Right lobe of liver (tissue), 6 donors: ENCODE measurements at regions of chr1 and their contacts with region 1.

Region 1: GRCh38 chr1:30911046-30911954 is 2.7 kb upstream of the SDC3 start:
- DNase-seq: peak; percentile 85 to 89 (median 86)
- ATAC-seq: peak; percentile 75 to 83 (median 78)
- H3K4me3 ChIP-seq: no peak overlapping the region
- H3K27ac ChIP-seq: no peak overlapping the region
- H3K4me1 ChIP-seq: peaks cover 0 to 4% (median 0%) of the 10 kb centered on the region in 4 donors
- H3K27me3 ChIP-seq: no peaks in the 10 kb centered on the region
- CTCF ChIP-seq: peak; percentile 81 to 93 (median 86)
- POLR2A ChIP-seq: no peak

Region 2: DNA sequence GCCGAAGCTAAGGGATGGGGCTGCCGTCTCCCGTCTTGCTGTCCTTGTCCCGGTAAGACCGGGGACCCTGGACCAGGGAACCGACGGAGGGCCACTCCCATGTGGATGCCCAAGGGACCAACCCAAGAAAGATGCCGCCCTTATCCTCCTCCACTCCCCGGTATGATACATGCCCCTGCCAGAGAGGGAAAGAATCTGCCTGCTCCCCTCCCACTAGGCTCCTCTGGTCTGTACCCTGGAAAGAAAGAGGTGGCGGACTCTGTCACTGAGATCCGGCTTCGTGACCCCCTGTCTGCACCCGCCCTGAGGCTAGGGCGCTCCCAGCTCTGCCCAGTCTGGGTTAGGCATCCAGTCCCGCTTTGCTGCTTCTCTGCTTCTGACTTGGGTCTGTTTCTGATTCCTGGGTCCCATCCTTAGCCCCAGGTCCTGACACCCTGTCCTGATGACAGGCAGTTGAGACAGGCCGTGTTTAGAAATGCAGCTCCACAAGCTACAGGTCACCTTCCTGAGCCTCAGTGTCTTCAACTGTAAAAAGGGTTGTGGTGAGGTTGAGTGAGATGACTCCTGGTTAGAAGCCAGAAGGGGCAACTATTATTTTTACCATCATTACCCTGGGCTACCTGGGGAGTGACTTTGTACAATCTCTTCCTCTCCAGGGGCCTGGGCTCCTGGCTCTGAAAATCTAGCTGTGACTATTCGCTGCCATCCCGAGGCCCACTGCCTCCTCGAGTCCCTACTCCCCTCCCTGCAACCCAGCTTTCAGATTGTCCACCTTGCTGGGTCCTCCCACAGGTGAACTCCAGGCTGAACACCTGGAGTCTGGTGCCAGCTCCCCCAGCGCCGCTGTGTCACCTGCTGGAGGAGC is 191.7 kb before region 1 on chr1:
- intact Hi-C with region 1: loop called in 1 of 2 experiments (anchors 10 kb)
- DNase-seq: peak in 1 of 3 donors; percentile 55
- ATAC-seq: no peak
- H3K4me3 ChIP-seq: peak overlapping the region; percentile 51 to 60 (median 59)
- H3K27ac ChIP-seq: peak overlapping the region; percentile 97 to 99 (median 99)
- H3K4me1 ChIP-seq: peaks cover 0 to 7% (median 0%) of the 10 kb centered on the region in 4 donors
- H3K27me3 ChIP-seq: no peaks in the 10 kb centered on the region
- CTCF ChIP-seq: peak in 1 of 4 donors; percentile 1
- POLR2A ChIP-seq: no peak

Region 3: DNA sequence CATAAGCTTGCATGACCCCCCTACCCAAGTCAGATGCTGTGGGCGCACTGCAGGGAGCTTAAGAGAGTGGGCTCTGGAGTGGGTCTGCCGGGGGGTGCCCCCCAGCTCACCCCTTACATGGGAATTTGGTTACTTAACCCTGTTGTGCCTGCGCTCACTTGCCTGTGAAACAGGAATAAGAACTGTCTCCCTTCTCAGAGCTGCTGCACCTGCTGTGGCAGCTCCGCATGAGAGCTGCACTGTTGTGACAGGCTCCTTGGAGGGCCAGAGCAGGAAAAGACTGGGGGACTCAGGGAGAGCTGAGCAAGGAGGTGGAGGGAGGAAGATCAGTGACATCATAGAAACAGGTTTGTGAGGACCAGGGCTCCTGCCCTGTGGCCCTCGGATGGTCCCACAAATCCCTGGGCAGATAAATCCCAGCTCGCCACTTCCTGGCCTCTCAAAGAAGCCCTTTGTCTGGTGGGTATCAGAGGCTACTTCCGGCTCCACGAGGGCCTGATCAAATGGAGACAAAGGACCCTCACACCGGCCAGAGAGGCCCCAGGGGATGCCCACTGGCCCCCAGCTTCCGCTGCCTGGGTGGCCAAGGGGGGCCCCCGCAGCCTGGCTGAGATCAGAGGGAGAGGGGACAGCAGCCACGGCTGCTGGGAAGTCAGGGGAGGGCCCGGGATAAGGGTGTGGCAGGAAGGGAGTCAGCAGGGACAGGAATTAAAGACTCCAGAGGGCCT is 124.9 kb before region 1 on chr1:
- intact Hi-C with region 1: loop called in 1 of 2 experiments (anchors 5 kb)
- DNase-seq: peak in 1 of 3 donors; percentile 30
- ATAC-seq: no peak
- H3K4me3 ChIP-seq: no peak overlapping the region
- H3K27ac ChIP-seq: no peak overlapping the region
- H3K4me1 ChIP-seq: peaks cover 0 to 12% (median 5%) of the 10 kb centered on the region in 4 donors
- H3K27me3 ChIP-seq: no peaks in the 10 kb centered on the region
- CTCF ChIP-seq: no peak
- POLR2A ChIP-seq: no peak

Region 4: DNA sequence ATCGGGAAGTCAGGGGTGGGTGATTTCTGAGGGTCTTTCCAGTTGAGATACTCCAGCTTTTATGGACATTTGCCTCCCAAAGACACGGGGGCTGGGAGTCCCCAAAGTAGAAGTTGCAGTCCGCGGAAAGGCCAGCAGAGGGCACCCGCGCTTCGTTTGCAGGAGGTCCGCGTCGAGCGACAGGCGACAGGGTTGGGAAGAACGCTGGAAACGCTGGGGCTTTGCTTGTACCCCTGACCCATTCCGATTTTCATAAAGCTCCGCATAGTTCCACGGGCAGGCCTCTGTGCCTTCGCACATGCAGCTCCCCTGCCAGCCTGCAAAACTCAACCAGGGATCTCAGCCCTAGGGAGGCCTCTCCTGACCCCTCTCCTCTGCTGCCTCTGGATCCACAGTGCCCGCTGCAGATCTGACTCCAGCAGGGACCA is 109.5 kb before region 1 on chr1:
- intact Hi-C with region 1: loop called (anchors 2 to 5 kb)
- DNase-seq: peak; percentile 79 to 83 (median 83)
- ATAC-seq: peak; percentile 75 to 86 (median 82)
- H3K4me3 ChIP-seq: no peak overlapping the region
- H3K27ac ChIP-seq: no peak overlapping the region
- H3K4me1 ChIP-seq: peaks cover 0 to 6% (median 0%) of the 10 kb centered on the region in 4 donors
- H3K27me3 ChIP-seq: no peaks in the 10 kb centered on the region
- CTCF ChIP-seq: peak; percentile 94 to 97 (median 95)
- POLR2A ChIP-seq: no peak